Transverse colon (tissue), 4 donors: ENCODE measurements at regions of chr7 and their contacts with region 1.

Region 1: GRCh38 chr7:25494896-25495295 is 266.6 kb upstream of the NPVF start:
- DNase-seq: no peak
- H3K4me3 ChIP-seq: no peak overlapping the region
- H3K27ac ChIP-seq: peak overlapping the region in 2 of 4 donors; percentile 40 to 42
- H3K4me1 ChIP-seq: peaks cover 0 to 20% (median 0%) of the 10 kb centered on the region in 4 donors
- H3K27me3 ChIP-seq: no peaks in the 10 kb centered on the region
- CTCF ChIP-seq: no peak
- EP300 ChIP-seq: no peak
- POLR2A ChIP-seq: no peak

Region 2: DNA sequence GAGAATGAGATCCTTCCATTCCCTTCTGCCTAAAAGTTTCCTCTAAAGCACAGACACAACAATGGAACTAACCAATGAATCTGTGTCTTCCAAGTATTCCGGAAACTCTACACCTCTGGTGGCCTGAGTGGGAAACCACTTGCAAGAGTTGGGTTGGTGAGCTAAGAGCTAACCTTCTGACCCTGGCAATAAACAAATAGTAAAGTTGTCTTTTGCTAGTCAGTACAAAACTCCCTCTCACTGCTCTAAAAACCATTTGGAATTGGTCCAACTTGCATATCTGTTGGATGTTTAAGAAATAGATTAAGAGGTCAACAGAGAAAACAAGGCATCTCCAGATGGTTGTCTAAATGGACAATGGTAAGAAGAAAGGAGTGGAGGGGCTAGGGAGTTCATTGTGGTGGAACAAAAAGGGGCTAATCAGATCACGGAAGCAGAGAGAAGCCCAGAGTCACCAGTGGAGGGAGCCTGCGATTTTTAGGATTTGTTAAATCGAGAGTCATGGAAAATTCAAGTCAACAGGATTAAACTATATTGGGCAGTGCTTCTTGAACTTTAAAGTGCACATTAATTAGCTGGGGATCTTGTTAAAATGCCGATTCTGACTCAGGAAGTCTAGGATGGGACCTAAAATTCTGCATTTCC is 1940.0 kb after region 1 on chr7:
- in situ Hi-C with region 1: no loop called
- intact Hi-C with region 1: loop called (anchors 5 kb)
- DNase-seq: no peak
- H3K4me3 ChIP-seq: no peak overlapping the region
- H3K27ac ChIP-seq: no peak overlapping the region
- H3K4me1 ChIP-seq: no peaks in the 10 kb centered on the region
- H3K27me3 ChIP-seq: no peaks in the 10 kb centered on the region
- CTCF ChIP-seq: no peak
- EP300 ChIP-seq: no peak
- POLR2A ChIP-seq: no peak